PC-3 (cell line): ENCODE measurements at regions of chr7 and their contacts with region 1.

Region 1: GRCh38 chr7:13257661-13258060 is 570.2 kb downstream of the ARL4A start:
- DNase-seq: no peak
- ATAC-seq: no peak
- H3K4me3 ChIP-seq: no peak overlapping the region
- H3K27ac ChIP-seq: no peak overlapping the region
- H3K4me1 ChIP-seq: no peaks in the 10 kb centered on the region
- H3K27me3 ChIP-seq: no peaks in the 10 kb centered on the region
- CTCF ChIP-seq: no peak

Region 2: GRCh38 chr7:13067036-13067435 is 190.6 kb before region 1 on chr7:
- CTCF ChIA-PET with region 1: no interaction called
- POLR2A ChIA-PET with region 1: interaction called, 13 read pairs
- intact Hi-C with region 1: no loop called
- DNase-seq: no peak
- ATAC-seq: no peak
- H3K4me3 ChIP-seq: no peak overlapping the region
- H3K27ac ChIP-seq: no peak overlapping the region
- H3K4me1 ChIP-seq: no peaks in the 10 kb centered on the region
- H3K27me3 ChIP-seq: no peaks in the 10 kb centered on the region
- CTCF ChIP-seq: no peak

Region 3: DNA sequence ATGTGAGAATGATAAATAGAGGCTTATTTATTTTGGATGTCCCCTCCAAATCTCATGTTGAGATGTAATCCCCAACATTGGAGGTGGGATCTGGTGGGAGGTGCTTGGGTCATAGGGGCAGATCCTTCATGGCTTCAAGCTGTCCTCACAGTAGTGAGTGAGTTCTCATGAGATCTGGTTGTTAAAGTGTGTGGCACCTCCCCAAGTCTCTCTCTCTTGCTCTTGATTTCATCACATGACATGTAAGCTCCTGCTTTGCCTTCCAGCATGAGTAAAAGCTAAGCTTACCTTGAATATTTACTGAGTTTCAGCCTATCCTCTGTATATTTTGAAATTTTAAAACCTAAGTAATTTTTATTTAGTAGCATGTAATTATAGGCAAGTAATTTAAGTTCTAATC is 125.3 kb before region 1 on chr7:
- CTCF ChIA-PET with region 1: no interaction called
- POLR2A ChIA-PET with region 1: no interaction called
- intact Hi-C with region 1: loop called (anchors 5 kb)
- DNase-seq: no peak
- ATAC-seq: no peak
- H3K4me3 ChIP-seq: no peak overlapping the region
- H3K27ac ChIP-seq: no peak overlapping the region
- H3K4me1 ChIP-seq: no peaks in the 10 kb centered on the region
- H3K27me3 ChIP-seq: no peaks in the 10 kb centered on the region
- CTCF ChIP-seq: no peak